SK-N-SH (cell line): ENCODE measurements at regions of chr17 and their contacts with region 1.

Region 1: DNA sequence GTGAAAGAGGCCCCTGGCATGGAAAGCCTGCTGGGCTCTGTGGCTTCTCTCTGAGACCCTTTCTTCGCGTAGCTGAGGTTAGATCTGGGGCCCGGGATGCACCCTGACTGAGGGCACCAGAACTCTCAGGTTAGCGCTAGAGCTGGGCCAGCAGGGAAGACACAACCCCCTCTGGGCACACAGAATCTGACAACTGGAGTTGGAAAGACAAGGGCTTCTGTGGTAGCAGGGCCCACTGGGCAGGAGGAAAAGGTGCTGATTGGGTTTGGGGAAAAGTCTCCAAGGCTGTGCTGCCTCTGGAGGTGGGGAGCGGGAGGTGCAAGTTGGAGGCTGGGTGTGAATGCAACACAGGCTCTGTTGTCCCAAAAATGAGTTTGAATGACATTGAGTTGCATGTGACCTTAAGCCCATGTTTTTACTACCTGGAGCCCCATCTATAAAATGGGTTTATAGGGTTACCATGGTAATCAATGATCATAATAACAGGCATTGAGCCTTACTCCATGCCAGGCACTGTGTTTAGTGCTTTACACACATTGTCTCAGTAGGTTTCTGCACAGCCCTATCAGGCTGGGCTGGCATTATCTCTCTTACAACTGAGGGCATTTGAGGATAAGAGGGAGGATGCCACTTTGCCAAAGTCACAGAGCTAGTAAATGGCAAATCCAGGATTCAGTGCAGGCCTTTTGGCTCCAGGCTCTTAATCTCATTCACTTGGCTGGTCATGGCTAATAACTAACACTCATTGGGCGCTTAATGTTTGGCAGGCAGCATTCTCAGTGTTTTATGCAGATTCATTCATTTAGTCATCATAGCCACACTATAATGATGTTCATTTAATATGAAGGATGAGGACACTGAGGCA is 9.5 kb upstream of the IGFBP4 start:
- DNase-seq: peak; percentile 58
- H3K4me3 ChIP-seq: no peak overlapping the region
- H3K27ac ChIP-seq: peak overlapping the region; percentile 48 to 99
- H3K4me1 ChIP-seq: peaks cover 9 to 34% of the 10 kb centered on the region in 2 experiments; a peak in 3 of 4 replicates
- H3K27me3 ChIP-seq: no peaks in the 10 kb centered on the region
- CTCF ChIP-seq: peak; percentile 59
- EP300 ChIP-seq: peak in 1 of 2 experiments; percentile 57; a peak in 2 of 4 replicates
- RAD21 ChIP-seq: peak; percentile 52

Region 2: GRCh38 chr17:40457964-40458791 is 24.4 kb after region 1 on chr17:
- CTCF ChIA-PET with region 1: interaction called, 265 read pairs
- POLR2A ChIA-PET with region 1: no interaction called
- DNase-seq: peak; percentile 73
- H3K4me3 ChIP-seq: peak overlapping the region in 1 of 2 experiments; percentile 17; a peak in 1 of 4 replicates
- H3K27ac ChIP-seq: peak overlapping the region; percentile 68 to 92
- H3K4me1 ChIP-seq: peaks cover 33 to 84% of the 10 kb centered on the region in 2 experiments
- H3K27me3 ChIP-seq: no peaks in the 10 kb centered on the region
- CTCF ChIP-seq: no peak
- EP300 ChIP-seq: peak; percentile 80 to 95; a peak in 3 of 4 replicates
- RAD21 ChIP-seq: no peak

Region 3: GRCh38 chr17:40484248-40484647 is 50.5 kb after region 1 on chr17:
- CTCF ChIA-PET with region 1: no interaction called
- POLR2A ChIA-PET with region 1: no interaction called
- DNase-seq: no peak
- H3K4me3 ChIP-seq: no peak overlapping the region
- H3K27ac ChIP-seq: no peak overlapping the region
- H3K4me1 ChIP-seq: peaks cover 11 to 25% of the 10 kb centered on the region in 2 experiments; a peak in 2 of 4 replicates
- H3K27me3 ChIP-seq: no peaks in the 10 kb centered on the region
- CTCF ChIP-seq: no peak
- EP300 ChIP-seq: no peak
- RAD21 ChIP-seq: no peak